ENCODE measurements at regions of chr4 and their contacts with region 1.

Region 1: GRCh38 chr4:26127851-26128337 is 192.9 kb upstream of the RBPJ start:
- DNase-seq: no peak
- H3K4me3 Mint-ChIP-seq: no peak overlapping the region
- H3K27ac Mint-ChIP-seq: no peak overlapping the region
- H3K4me1 Mint-ChIP-seq: peaks cover 32% of the 10 kb centered on the region
- H3K27me3 Mint-ChIP-seq: no peaks in the 10 kb centered on the region

Region 2: DNA sequence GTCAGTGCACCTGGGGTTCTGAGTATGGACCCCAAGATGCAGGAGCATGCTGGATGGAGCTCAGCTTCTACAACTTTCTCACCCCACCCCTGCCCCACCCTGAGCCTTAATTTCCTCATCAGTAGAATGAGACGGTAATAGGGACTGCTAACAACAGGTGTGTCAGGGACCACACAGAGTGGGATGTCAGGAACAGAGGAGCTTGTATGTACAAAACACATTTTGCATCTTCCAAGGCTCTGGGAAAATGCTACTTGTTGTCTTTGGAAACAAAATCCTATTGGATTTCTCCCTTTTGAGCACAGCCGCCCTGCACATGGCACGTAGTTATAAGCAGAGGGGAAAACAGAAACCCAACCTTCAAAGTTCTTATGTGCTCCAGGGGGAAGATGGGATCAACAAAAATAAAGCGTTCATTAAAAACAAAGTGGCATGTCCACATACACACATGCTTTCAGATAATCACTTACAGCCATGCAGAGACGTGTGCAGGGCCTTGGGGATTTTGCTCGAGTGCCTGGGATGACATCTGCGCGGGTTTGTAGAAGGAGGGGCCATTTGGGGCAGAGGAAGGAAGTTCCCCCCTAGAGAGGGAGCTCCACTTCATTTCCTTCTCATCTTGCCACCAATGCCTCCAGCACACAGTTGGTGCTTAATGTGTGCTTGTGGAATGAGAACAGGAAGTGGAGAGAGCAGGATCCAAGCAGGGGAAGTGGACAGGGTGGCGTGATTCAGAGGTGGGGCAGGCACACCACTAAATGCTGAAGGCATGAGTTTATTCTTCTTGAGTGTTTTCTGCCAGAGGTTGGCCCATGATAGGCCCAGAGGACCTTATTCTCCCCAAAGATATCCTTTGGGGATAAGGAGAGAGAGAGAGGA is 75.0 kb before region 1 on chr4:
- CTCF ChIA-PET with region 1: no interaction called
- POLR2A ChIA-PET with region 1: no interaction called
- DNase-seq: no peak
- H3K4me3 Mint-ChIP-seq: no peak overlapping the region
- H3K27ac Mint-ChIP-seq: no peak overlapping the region
- H3K4me1 Mint-ChIP-seq: peaks cover 4% of the 10 kb centered on the region
- H3K27me3 Mint-ChIP-seq: no peaks in the 10 kb centered on the region

Region 3: DNA sequence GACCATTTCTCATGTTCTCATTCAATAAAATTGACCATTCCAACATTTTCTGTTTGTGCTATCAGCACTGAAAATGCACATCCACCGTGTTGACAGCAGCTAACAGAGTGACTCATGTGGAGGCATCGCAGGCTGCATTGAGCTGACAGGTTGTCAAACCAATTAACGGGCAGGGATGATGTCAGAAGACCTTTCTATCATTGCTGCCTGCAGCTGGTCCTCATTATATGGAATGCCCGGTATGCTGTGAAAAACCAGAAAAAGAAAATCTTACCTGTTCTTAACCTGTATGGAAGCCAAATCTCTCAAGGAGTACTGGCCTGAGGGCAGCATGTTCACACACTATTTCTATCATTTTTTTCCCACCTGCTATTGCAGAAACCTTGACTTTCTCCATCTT is 11.8 kb before region 1 on chr4:
- CTCF ChIA-PET with region 1: interaction called, 10 read pairs
- POLR2A ChIA-PET with region 1: no interaction called
- DNase-seq: no peak
- H3K4me3 Mint-ChIP-seq: no peak overlapping the region
- H3K27ac Mint-ChIP-seq: no peak overlapping the region
- H3K4me1 Mint-ChIP-seq: no peaks in the 10 kb centered on the region
- H3K27me3 Mint-ChIP-seq: peaks cover 14% of the 10 kb centered on the region

Measured in activated CD4-positive, alpha-beta T cell treated with anti-CD3 and anti-CD28 coated beads, Interleukin-2, amount 10 ng/mL, durations not matched to agents 7 days and 5 days (primary cell).